ENCODE measurements at regions of chr6 and their contacts with region 1.

Region 1: DNA sequence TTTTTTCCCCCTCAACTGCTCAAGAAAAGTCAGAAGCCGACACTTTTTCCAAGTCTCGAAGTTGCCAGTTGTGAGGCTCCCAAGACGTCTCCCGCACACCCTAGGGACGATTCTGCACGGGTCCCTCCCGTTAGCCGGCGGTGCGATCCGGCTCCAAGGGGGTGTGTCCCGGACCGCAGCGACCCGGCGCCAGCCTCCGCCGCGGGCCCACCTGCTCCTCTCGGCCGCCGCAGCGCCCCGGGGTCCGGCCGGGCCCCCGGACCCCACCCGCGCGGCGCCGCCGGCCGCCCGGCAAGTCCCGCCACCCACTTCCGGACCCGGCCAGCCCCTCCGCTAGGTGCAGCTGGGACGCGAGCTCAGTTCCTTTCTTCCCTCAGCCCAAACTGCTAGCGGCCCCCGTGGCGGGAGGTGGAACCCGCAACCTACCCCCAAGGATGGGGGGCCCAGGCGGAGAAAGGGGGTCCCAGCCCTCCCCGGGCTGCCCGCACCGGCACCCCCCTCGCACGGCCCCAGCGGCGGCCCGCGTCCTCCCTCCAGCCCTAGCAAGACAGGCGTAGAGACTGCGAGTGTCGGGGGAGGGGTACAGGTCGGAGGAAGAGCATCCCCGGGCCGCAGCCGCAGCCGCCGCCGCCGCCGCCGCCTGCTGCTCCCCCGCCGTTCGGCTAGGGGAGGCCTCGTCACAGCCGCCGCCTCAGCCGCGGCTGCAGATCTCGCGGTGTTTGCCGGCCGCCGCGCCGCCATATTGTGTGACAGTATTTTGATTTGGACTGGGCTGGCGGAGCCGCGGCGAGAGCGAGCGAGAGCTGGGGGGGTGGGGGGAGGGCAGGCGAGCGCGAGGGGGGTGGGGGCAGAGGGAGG is 485 bp upstream of the TAB2 start:
- DNase-seq: peak; percentile 66 to 86 (median 81)
- H3K4me3 ChIP-seq: peak overlapping the region; percentile 52 to 97 (median 87)
- H3K27ac ChIP-seq: peak overlapping the region; percentile 76 to 99 (median 96)
- H3K27me3 ChIP-seq: no peaks in the 10 kb centered on the region
- CTCF ChIP-seq: peak in 7 of 56 donors; percentile 2 to 26 (median 11)

Region 2: GRCh38 chr6:149082286-149082707 is 234.7 kb before region 1 on chr6:
- intact Hi-C with region 1: loop called in 1 of 2 experiments (anchors 10 kb)
- DNase-seq: peak; percentile 60 to 94 (median 79)
- H3K4me3 ChIP-seq: no peak overlapping the region
- H3K27ac ChIP-seq: peak overlapping the region in 2 of 59 donors; percentile 31 to 56
- H3K27me3 ChIP-seq: no peaks in the 10 kb centered on the region
- CTCF ChIP-seq: peak; percentile 59 to 97 (median 88)

Region 3: DNA sequence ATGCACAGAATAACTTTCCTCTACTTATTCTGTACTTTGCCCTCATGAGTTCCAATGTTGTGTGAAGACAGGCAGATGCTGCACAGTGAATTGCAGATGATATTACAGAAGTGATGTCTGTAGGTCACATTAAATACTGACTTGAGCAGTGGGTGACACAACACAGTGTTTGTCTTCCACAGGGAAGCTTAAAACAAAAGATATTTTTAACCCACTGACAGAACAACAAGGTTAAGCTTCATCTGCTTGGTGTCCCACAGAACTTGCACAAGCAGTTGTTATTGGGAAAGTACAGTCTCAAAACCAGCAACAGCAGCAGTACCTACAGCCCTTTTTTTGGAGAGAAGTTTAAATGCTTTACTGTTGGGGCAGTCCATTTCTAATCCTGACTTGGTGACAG is 93.5 kb after region 1 on chr6:
- intact Hi-C with region 1: loop called in 1 of 2 experiments (anchors 10 kb)
- DNase-seq: no peak
- H3K4me3 ChIP-seq: no peak overlapping the region
- H3K27ac ChIP-seq: peak overlapping the region in 14 of 59 donors; percentile 0 to 57 (median 20)
- H3K27me3 ChIP-seq: no peaks in the 10 kb centered on the region
- CTCF ChIP-seq: no peak

Measured in dorsolateral prefrontal cortex (tissue), 120 donors.